ENCODE measurements at regions of chr1 and their contacts with region 1.

Region 1: DNA sequence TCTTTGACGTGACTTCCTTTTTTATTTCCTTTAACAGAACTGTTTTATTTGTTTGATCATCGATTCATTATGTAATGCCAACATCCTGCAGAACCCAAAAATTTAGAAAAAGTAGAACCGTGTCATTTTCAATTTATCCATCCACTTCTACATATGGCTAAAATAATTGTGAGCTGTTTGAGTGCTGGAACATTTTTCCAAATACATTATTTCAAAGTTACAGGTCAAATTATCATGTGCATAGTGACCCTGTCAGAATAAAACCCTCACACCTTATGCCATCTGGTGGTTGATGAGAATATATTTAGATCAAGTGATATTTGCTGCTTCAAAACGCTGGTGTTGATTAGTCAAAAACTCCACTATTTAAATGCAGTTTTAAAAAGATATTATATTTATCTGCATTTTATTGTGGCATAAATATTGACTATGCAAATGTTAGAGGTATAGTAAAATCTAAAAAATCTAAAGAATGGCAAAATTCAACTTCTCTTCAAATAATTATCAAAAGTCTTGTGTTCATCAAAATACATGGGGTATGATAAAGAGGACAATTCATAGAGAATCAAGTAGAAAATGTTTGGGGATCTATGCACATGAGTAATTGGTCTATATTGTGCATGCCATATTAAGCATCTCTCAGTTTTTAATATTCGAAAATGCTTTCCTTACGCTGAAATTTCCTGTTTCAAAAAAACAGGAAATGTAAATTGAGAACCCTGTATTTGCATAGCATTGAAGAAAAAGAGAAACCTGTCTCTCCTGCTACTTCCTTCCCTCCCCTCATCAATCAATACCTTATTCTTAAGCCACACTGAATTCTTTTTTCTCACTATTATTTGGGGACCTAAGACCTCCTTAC is 39.7 kb downstream of the UBE2U start:
- DNase-seq: peak; percentile 41
- H3K4me3 ChIP-seq: 0 out of 4 replicates have a peak overlapping the region, but pooled peaks of 1 of the 2 experiments have one; percentile 1
- H3K27ac ChIP-seq: peak overlapping the region in 1 of 2 experiments; percentile 91; a peak in 2 of 4 replicates
- H3K4me1 ChIP-seq: peaks cover 10 to 22% of the 10 kb centered on the region in 2 experiments; a peak in 3 of 4 replicates
- H3K27me3 ChIP-seq: no peaks in the 10 kb centered on the region
- CTCF ChIP-seq: peak; percentile 72
- EP300 ChIP-seq: no peak
- RAD21 ChIP-seq: peak; percentile 93

Region 2: GRCh38 chr1:63575340-63575826 is 667.7 kb before region 1 on chr1:
- CTCF ChIA-PET with region 1: interaction called, 10 read pairs
- POLR2A ChIA-PET with region 1: interaction called, 5 read pairs
- DNase-seq: peak; percentile 27
- H3K4me3 ChIP-seq: no peak overlapping the region
- H3K27ac ChIP-seq: no peak overlapping the region
- H3K4me1 ChIP-seq: no peaks in the 10 kb centered on the region
- H3K27me3 ChIP-seq: no peaks in the 10 kb centered on the region
- CTCF ChIP-seq: peak; percentile 72
- EP300 ChIP-seq: no peak
- RAD21 ChIP-seq: peak; percentile 48

Region 3: DNA sequence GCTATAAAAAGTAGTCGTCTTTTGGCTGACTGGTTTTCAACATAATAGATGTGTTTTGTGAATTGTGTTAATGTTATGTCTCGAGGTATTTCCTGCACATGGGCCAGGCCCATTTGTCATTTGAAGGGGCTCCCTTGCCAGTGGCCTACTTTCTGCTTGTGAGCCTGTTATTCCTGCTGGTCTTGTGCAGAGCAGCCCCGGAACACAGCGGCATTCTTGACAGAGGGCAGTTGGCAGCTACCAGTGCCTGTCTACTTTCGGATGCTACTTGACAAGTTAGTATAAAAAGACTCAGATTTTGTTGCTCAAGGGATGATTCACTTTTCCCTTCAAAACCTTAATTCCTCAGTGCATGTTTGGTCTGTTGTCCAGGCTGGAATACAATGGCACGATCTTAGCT is 621.4 kb before region 1 on chr1:
- CTCF ChIA-PET with region 1: interaction called, 27 read pairs
- POLR2A ChIA-PET with region 1: no interaction called
- DNase-seq: no peak
- H3K4me3 ChIP-seq: no peak overlapping the region
- H3K27ac ChIP-seq: peak overlapping the region in 1 of 2 experiments; percentile 65; a peak in 1 of 4 replicates
- H3K4me1 ChIP-seq: peaks cover 5 to 11% of the 10 kb centered on the region in 2 experiments
- H3K27me3 ChIP-seq: no peaks in the 10 kb centered on the region
- CTCF ChIP-seq: no peak
- EP300 ChIP-seq: no peak
- RAD21 ChIP-seq: no peak

Region 4: GRCh38 chr1:63683759-63684158 is 559.4 kb before region 1 on chr1:
- CTCF ChIA-PET with region 1: interaction called, 16 read pairs
- POLR2A ChIA-PET with region 1: no interaction called
- DNase-seq: no peak
- H3K4me3 ChIP-seq: no peak overlapping the region
- H3K27ac ChIP-seq: no peak overlapping the region
- H3K4me1 ChIP-seq: no peaks in the 10 kb centered on the region
- H3K27me3 ChIP-seq: no peaks in the 10 kb centered on the region; the same call in 1 of the 2 replicates
- CTCF ChIP-seq: no peak
- EP300 ChIP-seq: no peak
- RAD21 ChIP-seq: no peak

Region 5: GRCh38 chr1:64171797-64172281 is 71.3 kb before region 1 on chr1:
- CTCF ChIA-PET with region 1: interaction called, 15 read pairs
- POLR2A ChIA-PET with region 1: interaction called, 4 read pairs
- DNase-seq: no peak
- H3K4me3 ChIP-seq: peak overlapping the region in 1 of 2 experiments; percentile 14; a peak in 3 of 4 replicates
- H3K27ac ChIP-seq: peak overlapping the region; percentile 91 to 100
- H3K4me1 ChIP-seq: peaks cover 33 to 46% of the 10 kb centered on the region in 2 experiments
- H3K27me3 ChIP-seq: no peaks in the 10 kb centered on the region
- CTCF ChIP-seq: no peak
- EP300 ChIP-seq: no peak
- RAD21 ChIP-seq: peak; percentile 33

Region 6: DNA sequence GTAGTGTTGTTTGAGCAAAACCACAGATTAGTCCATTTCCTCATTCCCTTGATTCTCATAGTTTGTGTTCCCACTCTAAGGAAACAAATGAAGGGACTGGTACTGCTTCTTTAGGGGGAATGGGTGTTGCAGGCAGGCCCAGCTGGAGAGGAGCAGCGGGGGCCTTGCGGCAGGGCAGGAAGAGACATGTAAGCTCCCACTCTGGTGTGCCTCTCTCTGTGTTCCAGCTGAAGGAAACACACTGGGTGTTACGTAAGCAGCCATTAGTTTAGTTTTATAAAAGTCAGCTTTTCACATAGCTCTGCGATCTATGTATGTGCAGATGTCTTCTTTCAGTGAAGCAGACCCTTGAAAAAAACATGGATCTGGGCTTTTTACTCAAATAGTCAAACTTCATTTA is 326.3 kb after region 1 on chr1:
- CTCF ChIA-PET with region 1: no interaction called
- POLR2A ChIA-PET with region 1: no interaction called
- DNase-seq: no peak
- H3K4me3 ChIP-seq: no peak overlapping the region
- H3K27ac ChIP-seq: no peak overlapping the region
- H3K4me1 ChIP-seq: peaks cover 2 to 7% of the 10 kb centered on the region in 2 experiments; a peak in 3 of 4 replicates
- H3K27me3 ChIP-seq: no peaks in the 10 kb centered on the region
- CTCF ChIP-seq: no peak
- EP300 ChIP-seq: no peak
- RAD21 ChIP-seq: no peak

Measured in SK-N-SH (cell line).